ENCODE measurements at regions of chr7 and their contacts with region 1.

Region 1: GRCh38 chr7:134016223-134016941 is 110.8 kb upstream of the LRGUK start:
- DNase-seq: peak in 2 of 4 experiments; percentile 57 to 58
- ATAC-seq: peak; percentile 89
- H3K4me3 ChIP-seq: no peak overlapping the region
- H3K27ac ChIP-seq: no peak overlapping the region
- H3K4me1 ChIP-seq: no peaks in the 10 kb centered on the region
- H3K27me3 ChIP-seq: no peaks in the 10 kb centered on the region
- CTCF ChIP-seq: peak; percentile 67 to 86 (median 84)
- EP300 ChIP-seq: no peak
- POLR2A ChIP-seq: no peak
- RAD21 ChIP-seq: peak; percentile 79 to 81

Region 2: GRCh38 chr7:132298790-132299189 is 1717.6 kb before region 1 on chr7:
- CTCF ChIA-PET with region 1: no interaction called
- POLR2A ChIA-PET with region 1: no interaction called
- in situ Hi-C with region 1: no loop called
- intact Hi-C with region 1: no loop called
- DNase-seq: no peak
- ATAC-seq: no peak
- H3K4me3 ChIP-seq: no peak overlapping the region
- H3K27ac ChIP-seq: no peak overlapping the region
- H3K4me1 ChIP-seq: no peaks in the 10 kb centered on the region
- H3K27me3 ChIP-seq: peaks cover 12 to 26% of the 10 kb centered on the region in 2 experiments; a peak in 3 of 5 replicates
- CTCF ChIP-seq: no peak
- EP300 ChIP-seq: no peak
- POLR2A ChIP-seq: no peak
- RAD21 ChIP-seq: no peak

Region 3: GRCh38 chr7:133602291-133602690 is 414.1 kb before region 1 on chr7:
- CTCF ChIA-PET with region 1: no interaction called
- POLR2A ChIA-PET with region 1: no interaction called
- in situ Hi-C with region 1: no loop called
- intact Hi-C with region 1: no loop called
- DNase-seq: no peak
- ATAC-seq: no peak
- H3K4me3 ChIP-seq: no peak overlapping the region
- H3K27ac ChIP-seq: no peak overlapping the region
- H3K4me1 ChIP-seq: no peaks in the 10 kb centered on the region
- H3K27me3 ChIP-seq: no peaks in the 10 kb centered on the region
- CTCF ChIP-seq: no peak
- EP300 ChIP-seq: no peak
- POLR2A ChIP-seq: no peak
- RAD21 ChIP-seq: no peak

Region 4: GRCh38 chr7:134108813-134109212 is 92.4 kb after region 1 on chr7:
- CTCF ChIA-PET with region 1: no interaction called
- POLR2A ChIA-PET with region 1: interaction called, 3 read pairs
- in situ Hi-C with region 1: no loop called
- intact Hi-C with region 1: loop called (anchors 2 kb)
- DNase-seq: peak in 1 of 4 experiments; percentile 34
- ATAC-seq: peak; percentile 75
- H3K4me3 ChIP-seq: no peak overlapping the region
- H3K27ac ChIP-seq: no peak overlapping the region
- H3K4me1 ChIP-seq: no peaks in the 10 kb centered on the region
- H3K27me3 ChIP-seq: peaks cover 0 to 4% of the 10 kb centered on the region in 2 experiments; a peak in 1 of 5 replicates
- CTCF ChIP-seq: peak; percentile 33 to 69 (median 52); a peak in 4 of 6 replicates
- EP300 ChIP-seq: no peak
- POLR2A ChIP-seq: no peak
- RAD21 ChIP-seq: peak; percentile 52 to 72; a peak in 3 of 4 replicates

Region 5: GRCh38 chr7:134140889-134141867 is 124.8 kb after region 1 on chr7:
- CTCF ChIA-PET with region 1: no interaction called
- POLR2A ChIA-PET with region 1: no interaction called
- in situ Hi-C with region 1: no loop called
- intact Hi-C with region 1: loop called (anchors 5 kb)
- DNase-seq: peak; percentile 89 to 92 (median 90)
- ATAC-seq: peak; percentile 99
- H3K4me3 ChIP-seq: no peak overlapping the region
- H3K27ac ChIP-seq: no peak overlapping the region
- H3K4me1 ChIP-seq: peaks cover 0 to 3% of the 10 kb centered on the region in 2 experiments; a peak in 2 of 5 replicates
- H3K27me3 ChIP-seq: peaks cover 0 to 4% of the 10 kb centered on the region in 2 experiments; a peak in 1 of 5 replicates
- CTCF ChIP-seq: peak; percentile 92 to 98 (median 97)
- EP300 ChIP-seq: 0 out of 2 replicates have a peak, but pooled peaks have one; percentile 13
- POLR2A ChIP-seq: no peak
- RAD21 ChIP-seq: peak; percentile 93 to 95

Measured in K562 (cell line).